ENCODE measurements at regions of chr15 and their contacts with region 1.

Region 1: GRCh38 chr15:66780172-66780972 is 78.3 kb downstream of the SMAD6 start:
- DNase-seq: peak; percentile 68
- H3K4me3 ChIP-seq: no peak overlapping the region
- H3K27ac ChIP-seq: no peak overlapping the region
- H3K4me1 ChIP-seq: peaks cover 18% of the 10 kb centered on the region
- H3K27me3 ChIP-seq: no peaks in the 10 kb centered on the region
- CTCF ChIP-seq: no peak

Region 2: DNA sequence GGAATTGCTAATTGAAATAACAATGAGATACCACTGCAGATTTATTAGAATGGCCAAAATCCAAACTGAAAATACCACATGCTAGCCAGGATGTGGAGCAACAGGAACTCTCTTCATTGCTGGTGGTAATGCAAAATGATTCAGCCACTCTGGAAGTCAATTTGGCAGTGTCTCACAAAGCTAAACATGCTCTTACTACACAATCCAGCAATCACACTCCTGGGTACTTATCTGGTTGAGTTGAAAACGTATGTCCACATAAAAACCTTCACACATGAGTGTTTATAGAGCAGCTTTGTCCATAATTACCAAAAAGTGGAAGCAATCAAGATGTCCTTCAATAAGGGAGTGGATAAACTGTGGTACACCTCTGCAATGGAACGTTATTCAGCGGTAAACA is 35.0 kb after region 1 on chr15:
- CTCF ChIA-PET with region 1: no interaction called
- dilution Hi-C with region 1: no loop called
- in situ Hi-C with region 1: no loop called
- intact Hi-C with region 1: no loop called
- DNase-seq: peak; percentile 77
- H3K4me3 ChIP-seq: no peak overlapping the region
- H3K27ac ChIP-seq: no peak overlapping the region
- H3K4me1 ChIP-seq: peaks cover 11% of the 10 kb centered on the region
- H3K27me3 ChIP-seq: no peaks in the 10 kb centered on the region
- CTCF ChIP-seq: peak in 1 of 2 donors; percentile 29

Region 3: DNA sequence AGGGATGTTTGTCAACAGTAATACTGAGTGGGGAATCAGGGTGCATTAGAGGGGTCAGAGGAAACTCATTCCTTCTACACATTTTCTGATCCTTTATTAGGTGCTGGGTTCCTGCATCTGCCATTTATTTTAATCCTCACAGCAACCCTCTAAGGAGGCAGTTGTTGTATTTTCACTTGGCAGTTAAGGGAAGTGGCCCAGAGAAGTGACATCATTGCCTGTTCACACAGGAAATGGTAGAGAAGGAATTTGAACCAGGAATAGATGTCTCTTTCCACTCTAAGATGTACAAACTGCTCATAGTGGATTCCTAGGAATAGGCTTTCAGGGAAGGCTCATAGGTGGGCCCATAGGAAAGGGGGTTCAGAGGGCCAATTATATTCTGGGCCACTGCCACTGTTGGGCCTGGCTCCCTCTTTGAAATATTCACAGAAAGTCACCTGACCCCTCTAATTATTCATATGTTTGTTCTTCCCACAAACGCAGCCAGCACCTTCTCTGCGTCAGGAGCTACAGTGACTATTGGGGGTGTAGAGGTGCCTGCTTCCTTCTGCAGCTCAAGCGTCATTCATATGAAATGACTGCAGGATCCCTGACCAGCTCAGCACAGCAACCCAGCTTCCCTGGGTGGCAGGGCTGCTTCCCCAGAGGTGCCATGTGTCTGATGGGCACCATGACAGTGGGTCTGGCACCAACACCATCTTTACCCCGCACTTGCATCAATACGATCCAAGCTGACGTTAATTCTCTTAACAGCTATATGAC is 121.1 kb after region 1 on chr15:
- CTCF ChIA-PET with region 1: no interaction called
- dilution Hi-C with region 1: no loop called
- in situ Hi-C with region 1: no loop called
- intact Hi-C with region 1: loop called (anchors 5 kb)
- DNase-seq: no peak
- H3K4me3 ChIP-seq: no peak overlapping the region
- H3K27ac ChIP-seq: no peak overlapping the region
- H3K4me1 ChIP-seq: peaks cover 3% of the 10 kb centered on the region
- H3K27me3 ChIP-seq: no peaks in the 10 kb centered on the region
- CTCF ChIP-seq: no peak

Measured in mammary epithelial cell (primary cell).